ENCODE measurements at regions of chr14 and their contacts with region 1.

Region 1: GRCh38 chr14:81170104-81170828 is 50.5 kb downstream of the GTF2A1 start:
- DNase-seq: peak; percentile 88
- ATAC-seq: peak; percentile 99
- H3K4me3 Mint-ChIP-seq: peak overlapping the region; percentile 87
- H3K27ac Mint-ChIP-seq: peak overlapping the region; percentile 92
- H3K4me1 Mint-ChIP-seq: peaks cover 33% of the 10 kb centered on the region
- H3K27me3 Mint-ChIP-seq: no peaks in the 10 kb centered on the region

Region 2: GRCh38 chr14:80959496-80959895 is 210.8 kb before region 1 on chr14:
- POLR2A ChIA-PET with region 1: interaction called, 16 read pairs
- DNase-seq: peak; percentile 45
- ATAC-seq: peak; percentile 96
- H3K4me3 Mint-ChIP-seq: peak overlapping the region; percentile 71
- H3K27ac Mint-ChIP-seq: peak overlapping the region; percentile 74
- H3K4me1 Mint-ChIP-seq: peaks cover 38% of the 10 kb centered on the region
- H3K27me3 Mint-ChIP-seq: peaks cover 25% of the 10 kb centered on the region